ENCODE measurements at regions of chr9 and their contacts with region 1.

Region 1: GRCh38 chr9:71571186-71571585 is 197.1 kb downstream of the CEMIP2 start:
- DNase-seq: no peak

Region 2: GRCh38 chr9:71295928-71296327 is 275.3 kb before region 1 on chr9:
- intact Hi-C with region 1: no loop called
- DNase-seq: no peak

Region 3: GRCh38 chr9:71549023-71549422 is 22.2 kb before region 1 on chr9:
- intact Hi-C with region 1: loop called in 1 of 2 experiments (anchors 1 kb)
- DNase-seq: no peak